Gastrocnemius medialis (tissue), 4 donors: ENCODE measurements at regions of chr13 and their contacts with region 1.

Region 1: GRCh38 chr13:29850224-29850898 is at the start of gene UBL3:
- DNase-seq: peak; percentile 96 to 97
- ATAC-seq: peak; percentile 91 to 92
- H3K4me3 ChIP-seq: peak within 1 kb of the TSS; percentile 76 to 97 (median 95)
- H3K27ac ChIP-seq: peak within 1 kb of the TSS; percentile 98 to 100 (median 100)
- H3K4me1 ChIP-seq: peaks cover 28 to 30% of the 10 kb centered on the region in 2 donors
- H3K27me3 ChIP-seq: no peaks in the 10 kb centered on the region
- CTCF ChIP-seq: no peak
- POLR2A ChIP-seq: peak; percentile 86 to 94
- total RNA-seq, gene UBL3: 27.8 to 32.4 (median 29.4) TPM

Region 2: GRCh38 chr13:29771247-29771646 is 79.1 kb before region 1 on chr13:
- in situ Hi-C with region 1: no loop called
- intact Hi-C with region 1: loop called (anchors 5 kb)
- DNase-seq: no peak
- ATAC-seq: no peak
- H3K4me3 ChIP-seq: no peak overlapping the region
- H3K27ac ChIP-seq: no peak overlapping the region
- H3K4me1 ChIP-seq: no peaks in the 10 kb centered on the region
- H3K27me3 ChIP-seq: no peaks in the 10 kb centered on the region
- CTCF ChIP-seq: peak; percentile 28 to 60 (median 44)
- POLR2A ChIP-seq: no peak

Region 3: GRCh38 chr13:29923554-29924481 is 73.5 kb after region 1 on chr13:
- in situ Hi-C with region 1: no loop called
- intact Hi-C with region 1: loop called (anchors 2 kb)
- DNase-seq: peak; percentile 16 to 60
- ATAC-seq: peak; percentile 58 to 79
- H3K4me3 ChIP-seq: no peak overlapping the region
- H3K27ac ChIP-seq: peak overlapping the region; percentile 49 to 73 (median 50)
- H3K4me1 ChIP-seq: peaks cover 21 to 26% of the 10 kb centered on the region in 2 donors
- H3K27me3 ChIP-seq: no peaks in the 10 kb centered on the region
- CTCF ChIP-seq: peak; percentile 39 to 74 (median 58)
- POLR2A ChIP-seq: no peak

Region 4: GRCh38 chr13:30002577-30002976 is 152.2 kb after region 1 on chr13:
- in situ Hi-C with region 1: no loop called
- intact Hi-C with region 1: no loop called
- DNase-seq: no peak
- ATAC-seq: no peak
- H3K4me3 ChIP-seq: no peak overlapping the region
- H3K27ac ChIP-seq: no peak overlapping the region
- H3K4me1 ChIP-seq: no peaks in the 10 kb centered on the region
- H3K27me3 ChIP-seq: no peaks in the 10 kb centered on the region
- CTCF ChIP-seq: no peak
- POLR2A ChIP-seq: no peak

Region 5: DNA sequence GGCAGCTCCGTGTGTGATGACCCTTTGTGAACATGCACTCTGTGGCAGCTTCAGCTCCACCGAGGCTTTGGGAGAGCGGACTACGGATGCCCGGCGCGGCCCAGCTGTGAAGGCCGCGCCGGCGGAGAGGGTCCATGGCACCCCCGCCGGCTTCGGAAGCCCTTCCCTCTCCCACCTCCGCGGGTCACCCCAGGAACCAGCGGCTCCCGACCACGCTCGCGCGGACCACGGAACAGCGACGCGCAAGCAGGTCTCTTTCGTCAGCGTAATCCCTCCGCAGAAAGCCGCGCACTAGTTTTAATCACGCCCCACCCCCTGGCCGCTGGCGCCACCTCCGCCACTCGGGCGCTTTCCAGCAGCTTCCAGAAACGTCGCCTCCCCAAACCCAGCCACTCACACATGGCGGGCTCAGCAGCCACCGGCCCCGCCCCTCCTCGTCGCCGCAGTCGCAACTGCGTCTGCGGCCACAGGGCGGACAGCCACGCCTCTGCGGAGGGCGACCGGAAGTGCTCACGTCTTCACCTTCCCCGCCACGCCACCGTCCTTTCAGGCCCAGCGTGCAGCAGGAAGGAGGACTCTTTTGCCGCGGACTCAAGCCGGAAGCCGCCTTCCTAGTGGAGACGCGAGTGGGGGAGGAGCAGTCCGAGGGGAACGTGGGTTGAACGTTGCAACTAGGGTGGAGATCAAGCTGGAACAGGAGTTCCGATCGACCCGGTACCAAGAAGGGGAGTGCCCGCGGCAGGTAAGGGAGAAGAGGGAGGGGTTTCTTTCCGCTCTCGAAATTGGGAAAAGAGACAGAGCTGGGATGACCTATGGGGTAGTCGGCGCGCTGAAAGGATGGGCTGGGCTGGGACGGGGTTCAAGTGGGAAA is 767.2 kb after region 1 on chr13 and contains the start of gene USPL1:
- in situ Hi-C with region 1: loop called in 1 of 4 experiments (anchors 10 kb)
- intact Hi-C with region 1: loop called (anchors 1 kb)
- DNase-seq: peak; percentile 96 to 98
- ATAC-seq: peak; percentile 84 to 87
- H3K4me3 ChIP-seq: peak within 1 kb of the TSS; percentile 81 to 91 (median 86)
- H3K27ac ChIP-seq: peak within 1 kb of the TSS; percentile 91 to 100 (median 98)
- H3K4me1 ChIP-seq: peaks cover 33 to 40% of the 10 kb centered on the region in 2 donors
- H3K27me3 ChIP-seq: no peaks in the 10 kb centered on the region
- CTCF ChIP-seq: peak; percentile 34 to 63 (median 51)
- POLR2A ChIP-seq: peak; percentile 93 to 96
- total RNA-seq, gene USPL1: 14.2 to 18.4 (median 15.6) TPM